CD8-positive, alpha-beta T cell (primary cell): ENCODE measurements at regions of chr5 and their contacts with region 1.

Region 1: GRCh38 chr5:96771395-96771794 is 36.4 kb downstream of the ERAP1 start:
- DNase-seq: peak in 1 of 9 experiments; percentile 24
- ATAC-seq: no peak
- H3K4me3 ChIP-seq: no peak overlapping the region
- H3K4me3 Mint-ChIP-seq: no peak overlapping the region
- H3K27ac ChIP-seq: peak overlapping the region in 1 of 2 experiments; percentile 34
- H3K27ac Mint-ChIP-seq: peak overlapping the region; percentile 68
- H3K4me1 ChIP-seq: no peaks in the 10 kb centered on the region
- H3K4me1 Mint-ChIP-seq: peaks cover 18% of the 10 kb centered on the region
- H3K27me3 ChIP-seq: no peaks in the 10 kb centered on the region
- H3K27me3 Mint-ChIP-seq: no peaks in the 10 kb centered on the region
- CTCF ChIP-seq: no peak

Region 2: GRCh38 chr5:96752341-96753016 is 18.9 kb before region 1 on chr5:
- CTCF ChIA-PET with region 1: interaction called, 13 read pairs
- POLR2A ChIA-PET with region 1: no interaction called
- intact Hi-C with region 1: no loop called
- DNase-seq: peak in 4 of 9 experiments; percentile 14 to 82 (median 65)
- ATAC-seq: peak; percentile 44
- H3K4me3 ChIP-seq: no peak overlapping the region
- H3K4me3 Mint-ChIP-seq: no peak overlapping the region
- H3K27ac ChIP-seq: no peak overlapping the region
- H3K27ac Mint-ChIP-seq: no peak overlapping the region
- H3K4me1 ChIP-seq: no peaks in the 10 kb centered on the region
- H3K4me1 Mint-ChIP-seq: no peaks in the 10 kb centered on the region
- H3K27me3 ChIP-seq: no peaks in the 10 kb centered on the region
- H3K27me3 Mint-ChIP-seq: no peaks in the 10 kb centered on the region
- CTCF ChIP-seq: peak; percentile 75

Region 3: GRCh38 chr5:96758621-96759020 is 12.8 kb before region 1 on chr5:
- CTCF ChIA-PET with region 1: interaction called, 4 read pairs
- POLR2A ChIA-PET with region 1: no interaction called
- intact Hi-C with region 1: loop called in 1 of 2 experiments (anchors 2 kb)
- DNase-seq: no peak
- ATAC-seq: no peak
- H3K4me3 ChIP-seq: no peak overlapping the region
- H3K4me3 Mint-ChIP-seq: no peak overlapping the region
- H3K27ac ChIP-seq: no peak overlapping the region
- H3K27ac Mint-ChIP-seq: peak overlapping the region; percentile 53
- H3K4me1 ChIP-seq: no peaks in the 10 kb centered on the region
- H3K4me1 Mint-ChIP-seq: peaks cover 12% of the 10 kb centered on the region
- H3K27me3 ChIP-seq: no peaks in the 10 kb centered on the region
- H3K27me3 Mint-ChIP-seq: no peaks in the 10 kb centered on the region
- CTCF ChIP-seq: no peak

Region 4: GRCh38 chr5:96785326-96786109 is 14.1 kb after region 1 on chr5:
- CTCF ChIA-PET with region 1: interaction called, 3 read pairs
- POLR2A ChIA-PET with region 1: interaction called, 4 read pairs
- intact Hi-C with region 1: loop called in 1 of 2 experiments (anchors 2 kb)
- DNase-seq: no peak
- ATAC-seq: no peak
- H3K4me3 ChIP-seq: no peak overlapping the region
- H3K4me3 Mint-ChIP-seq: no peak overlapping the region
- H3K27ac ChIP-seq: no peak overlapping the region
- H3K27ac Mint-ChIP-seq: peak overlapping the region; percentile 76
- H3K4me1 ChIP-seq: no peaks in the 10 kb centered on the region
- H3K4me1 Mint-ChIP-seq: peaks cover 6% of the 10 kb centered on the region
- H3K27me3 ChIP-seq: no peaks in the 10 kb centered on the region
- H3K27me3 Mint-ChIP-seq: no peaks in the 10 kb centered on the region
- CTCF ChIP-seq: no peak

Region 5: GRCh38 chr5:97026721-97027120 is 255.3 kb after region 1 on chr5:
- CTCF ChIA-PET with region 1: no interaction called
- POLR2A ChIA-PET with region 1: no interaction called
- intact Hi-C with region 1: loop called (anchors 5 kb)
- DNase-seq: no peak
- ATAC-seq: no peak
- H3K4me3 ChIP-seq: no peak overlapping the region
- H3K4me3 Mint-ChIP-seq: no peak overlapping the region
- H3K27ac ChIP-seq: no peak overlapping the region
- H3K27ac Mint-ChIP-seq: no peak overlapping the region
- H3K4me1 ChIP-seq: peaks cover 4% of the 10 kb centered on the region
- H3K4me1 Mint-ChIP-seq: peaks cover 11% of the 10 kb centered on the region
- H3K27me3 ChIP-seq: no peaks in the 10 kb centered on the region
- H3K27me3 Mint-ChIP-seq: no peaks in the 10 kb centered on the region
- CTCF ChIP-seq: no peak